HEK293 (cell line): ENCODE measurements at regions of chr1 and their contacts with region 1.

Region 1: GRCh38 chr1:15741183-15741850 is 982 bp upstream of the TMEM82 start:
- H3K4me3 ChIP-seq: no peak overlapping the region
- H3K27ac ChIP-seq: no peak overlapping the region
- H3K4me1 ChIP-seq: no peaks in the 10 kb centered on the region
- CTCF ChIP-seq: peak; percentile 93

Region 2: GRCh38 chr1:15595809-15596617 is 145.3 kb before region 1 on chr1:
- CTCF ChIA-PET with region 1: interaction called, 15 read pairs
- POLR2A ChIA-PET with region 1: interaction called, 3 read pairs
- H3K4me3 ChIP-seq: no peak overlapping the region
- H3K27ac ChIP-seq: no peak overlapping the region
- H3K4me1 ChIP-seq: no peaks in the 10 kb centered on the region
- CTCF ChIP-seq: no peak

Region 3: GRCh38 chr1:15760520-15761211 is 19.3 kb after region 1 on chr1:
- CTCF ChIA-PET with region 1: interaction called, 10 read pairs
- POLR2A ChIA-PET with region 1: interaction called, 5 read pairs
- H3K4me3 ChIP-seq: no peak overlapping the region
- H3K27ac ChIP-seq: no peak overlapping the region
- H3K4me1 ChIP-seq: peaks cover 7% of the 10 kb centered on the region; the same call in 1 of the 2 replicates
- CTCF ChIP-seq: no peak